Mammary epithelial cell (primary cell): ENCODE measurements at regions of chr1 and their contacts with region 1.

Region 1: DNA sequence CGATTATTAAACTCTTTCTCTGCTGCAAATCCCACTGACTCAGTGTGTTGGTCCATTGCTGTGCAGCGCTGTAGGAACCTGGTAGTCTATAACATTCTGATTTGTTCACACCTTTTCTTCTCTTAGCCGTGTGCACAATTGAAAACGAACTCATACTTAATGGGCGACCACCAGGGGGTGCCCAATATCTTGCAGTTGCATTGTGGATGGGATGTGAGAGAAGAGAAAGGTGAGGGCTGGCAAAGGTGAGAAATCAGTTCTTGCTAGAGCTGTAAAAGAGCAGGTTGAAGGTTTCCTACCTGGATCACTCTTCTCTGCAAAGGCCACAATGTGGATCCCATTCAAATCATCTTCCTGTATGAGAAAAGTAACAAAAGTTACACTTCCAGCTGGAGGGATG is 51.0 kb downstream of the CASQ2 start:
- DNase-seq: peak; percentile 30
- H3K4me3 ChIP-seq: no peak overlapping the region
- H3K27ac ChIP-seq: no peak overlapping the region
- H3K4me1 ChIP-seq: peaks cover 27% of the 10 kb centered on the region
- H3K27me3 ChIP-seq: no peaks in the 10 kb centered on the region
- CTCF ChIP-seq: peak; percentile 39 to 46

Region 2: GRCh38 chr1:115282807-115283208 is 434.7 kb before region 1 on chr1:
- CTCF ChIA-PET with region 1: no interaction called
- dilution Hi-C with region 1: no loop called
- in situ Hi-C with region 1: no loop called
- intact Hi-C with region 1: no loop called
- DNase-seq: no peak
- H3K4me3 ChIP-seq: no peak overlapping the region
- H3K27ac ChIP-seq: no peak overlapping the region
- H3K4me1 ChIP-seq: no peaks in the 10 kb centered on the region
- H3K27me3 ChIP-seq: peaks cover 4% of the 10 kb centered on the region
- CTCF ChIP-seq: no peak

Region 3: GRCh38 chr1:115660151-115660550 is 57.4 kb before region 1 on chr1:
- CTCF ChIA-PET with region 1: no interaction called
- dilution Hi-C with region 1: loop called (anchors 5 kb)
- in situ Hi-C with region 1: no loop called
- intact Hi-C with region 1: no loop called
- DNase-seq: no peak
- H3K4me3 ChIP-seq: no peak overlapping the region
- H3K27ac ChIP-seq: no peak overlapping the region
- H3K4me1 ChIP-seq: peaks cover 4% of the 10 kb centered on the region
- H3K27me3 ChIP-seq: no peaks in the 10 kb centered on the region
- CTCF ChIP-seq: no peak

Region 4: GRCh38 chr1:115764541-115764940 is 47.0 kb after region 1 on chr1:
- CTCF ChIA-PET with region 1: interaction called, 3 read pairs
- dilution Hi-C with region 1: loop called (anchors 5 kb)
- in situ Hi-C with region 1: loop called in 1 of 2 experiments (anchors 5 kb)
- intact Hi-C with region 1: loop called (anchors 1 kb)
- DNase-seq: peak; percentile 42
- H3K4me3 ChIP-seq: no peak overlapping the region
- H3K27ac ChIP-seq: no peak overlapping the region
- H3K4me1 ChIP-seq: no peaks in the 10 kb centered on the region
- H3K27me3 ChIP-seq: no peaks in the 10 kb centered on the region
- CTCF ChIP-seq: peak; percentile 67 to 69

Region 5: DNA sequence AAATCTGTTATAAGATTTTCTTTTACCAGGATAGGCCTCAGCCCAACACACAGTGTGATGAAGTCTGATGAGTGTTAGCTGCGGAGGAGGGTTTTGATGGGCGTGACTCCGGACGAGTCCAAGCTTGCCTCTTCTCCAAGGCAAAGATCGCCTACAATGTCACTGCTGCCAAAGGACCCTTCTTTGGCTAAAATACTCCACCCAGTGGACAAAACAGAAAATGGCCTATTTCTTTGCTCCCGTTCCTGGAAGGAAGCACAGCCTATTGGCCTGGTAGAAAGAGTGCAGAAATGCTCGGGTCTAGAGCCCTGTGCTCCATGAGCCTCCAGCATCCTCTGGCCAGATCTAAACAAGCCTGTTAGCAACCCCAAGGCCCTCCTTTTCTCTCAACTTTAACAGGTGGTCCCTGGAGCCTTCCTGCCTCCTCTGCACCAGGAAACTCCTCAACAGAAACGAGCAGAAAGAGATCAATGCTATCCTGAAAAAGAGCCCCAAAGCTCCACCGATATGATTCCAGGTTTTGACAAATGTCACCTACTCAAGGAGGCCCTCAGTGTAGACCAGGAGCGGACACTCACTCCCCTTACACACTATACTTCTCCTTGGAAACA is 54.4 kb after region 1 on chr1:
- CTCF ChIA-PET with region 1: no interaction called
- dilution Hi-C with region 1: no loop called
- in situ Hi-C with region 1: no loop called
- intact Hi-C with region 1: loop called (anchors 1 kb)
- DNase-seq: peak; percentile 94
- H3K4me3 ChIP-seq: no peak overlapping the region
- H3K27ac ChIP-seq: peak overlapping the region; percentile 86
- H3K4me1 ChIP-seq: peaks cover 6% of the 10 kb centered on the region
- H3K27me3 ChIP-seq: no peaks in the 10 kb centered on the region
- CTCF ChIP-seq: peak; percentile 80 to 87

Region 6: GRCh38 chr1:115829023-115829693 is 111.6 kb after region 1 on chr1:
- CTCF ChIA-PET with region 1: no interaction called
- dilution Hi-C with region 1: no loop called
- in situ Hi-C with region 1: no loop called
- intact Hi-C with region 1: no loop called
- DNase-seq: peak; percentile 93
- H3K4me3 ChIP-seq: no peak overlapping the region
- H3K27ac ChIP-seq: no peak overlapping the region
- H3K4me1 ChIP-seq: peaks cover 9% of the 10 kb centered on the region
- H3K27me3 ChIP-seq: no peaks in the 10 kb centered on the region
- CTCF ChIP-seq: no peak